Activated T-helper 1 cell treated with anti-CD3 and anti-CD28 coated beads, Interleukin-12 subunit alpha, Interleukin-12 subunit beta, Interleukin-2, Interleukin-4 antibody, amounts not matched to agents 30 ng/mL and 10 ng/mL and 1 ng/mL, durations not matched to agents 14 hours and 24 hours and 36 hours (primary cell): ENCODE measurements at regions of chr3 and their contacts with region 1.

Region 1: DNA sequence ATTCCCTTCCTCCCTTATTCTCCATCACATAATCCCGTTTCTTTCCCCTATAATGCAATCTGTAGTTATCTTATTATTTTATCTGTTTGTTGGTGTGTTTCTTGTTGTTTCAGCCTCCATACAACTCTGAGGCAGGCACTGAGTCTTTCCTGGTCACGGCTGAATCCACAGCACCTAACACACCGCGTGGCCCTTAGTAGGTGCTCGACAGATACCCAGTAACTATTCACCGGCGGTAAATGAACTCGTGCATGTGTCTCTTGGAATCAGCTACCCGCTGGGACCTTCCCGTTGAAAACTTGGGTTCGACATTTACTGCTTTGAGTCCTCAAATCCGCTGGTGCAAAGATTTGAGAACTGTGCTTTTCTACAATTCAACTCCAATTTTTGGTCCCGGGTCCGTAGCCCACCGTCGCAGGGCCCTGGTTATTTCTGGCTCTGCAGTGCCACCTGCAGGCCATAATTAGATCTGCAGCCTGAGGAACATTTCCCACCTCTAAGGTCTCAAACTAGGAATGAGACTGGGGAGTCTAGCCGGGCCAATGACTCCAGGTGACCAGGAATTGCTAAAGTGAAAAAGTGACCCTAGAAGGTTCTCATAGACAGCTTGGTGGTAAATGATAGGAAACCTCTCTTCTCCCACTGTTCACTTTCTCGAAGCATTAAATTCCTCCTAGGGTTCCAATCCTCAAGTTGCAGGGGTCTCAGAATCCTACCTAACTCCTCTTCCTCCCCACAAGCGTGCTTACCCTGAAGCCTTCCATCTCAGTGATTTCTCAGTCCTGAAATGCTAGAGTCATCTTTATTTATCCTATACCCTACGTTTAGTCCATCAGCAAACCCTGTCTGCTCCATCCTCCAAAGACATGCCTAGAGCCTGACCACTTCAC is 40.0 kb upstream of the TRH start:
- DNase-seq: peak; percentile 5
- H3K4me3 Mint-ChIP-seq: no peak overlapping the region
- H3K27ac Mint-ChIP-seq: no peak overlapping the region
- H3K4me1 Mint-ChIP-seq: peaks cover 8% of the 10 kb centered on the region
- H3K27me3 Mint-ChIP-seq: peaks cover 9% of the 10 kb centered on the region

Region 2: DNA sequence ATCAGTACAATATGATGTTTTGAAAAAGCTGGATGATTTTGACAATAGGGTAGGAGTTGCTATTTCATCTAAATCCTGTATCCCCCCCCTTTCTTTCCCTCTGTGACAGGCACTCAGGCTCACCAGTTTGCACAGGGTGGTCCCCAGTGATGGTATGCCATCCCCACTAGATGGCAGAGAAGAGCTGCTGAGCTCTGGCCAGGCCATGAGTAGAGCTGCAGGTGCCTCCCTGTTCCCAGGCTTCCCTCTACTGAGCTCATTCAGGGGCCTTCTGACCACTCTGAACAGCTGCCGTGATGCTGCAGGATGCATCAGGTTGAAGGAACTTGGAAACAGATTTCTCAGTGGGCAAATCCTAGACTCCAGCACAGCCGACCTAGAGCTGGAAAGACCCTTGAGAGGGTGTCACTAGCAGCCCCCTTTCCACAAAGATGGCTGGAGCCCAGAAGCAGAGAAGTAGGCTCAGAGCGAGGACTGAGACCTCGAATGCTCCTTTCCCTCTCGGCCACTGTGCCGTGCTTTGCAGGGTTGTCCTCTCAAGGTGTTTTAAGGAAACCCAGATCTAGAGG is 551.1 kb before region 1 on chr3:
- intact Hi-C with region 1: loop called (anchors 2 kb)
- DNase-seq: peak; percentile 8
- H3K4me3 Mint-ChIP-seq: no peak overlapping the region
- H3K27ac Mint-ChIP-seq: no peak overlapping the region
- H3K4me1 Mint-ChIP-seq: no peaks in the 10 kb centered on the region
- H3K27me3 Mint-ChIP-seq: no peaks in the 10 kb centered on the region

Region 3: DNA sequence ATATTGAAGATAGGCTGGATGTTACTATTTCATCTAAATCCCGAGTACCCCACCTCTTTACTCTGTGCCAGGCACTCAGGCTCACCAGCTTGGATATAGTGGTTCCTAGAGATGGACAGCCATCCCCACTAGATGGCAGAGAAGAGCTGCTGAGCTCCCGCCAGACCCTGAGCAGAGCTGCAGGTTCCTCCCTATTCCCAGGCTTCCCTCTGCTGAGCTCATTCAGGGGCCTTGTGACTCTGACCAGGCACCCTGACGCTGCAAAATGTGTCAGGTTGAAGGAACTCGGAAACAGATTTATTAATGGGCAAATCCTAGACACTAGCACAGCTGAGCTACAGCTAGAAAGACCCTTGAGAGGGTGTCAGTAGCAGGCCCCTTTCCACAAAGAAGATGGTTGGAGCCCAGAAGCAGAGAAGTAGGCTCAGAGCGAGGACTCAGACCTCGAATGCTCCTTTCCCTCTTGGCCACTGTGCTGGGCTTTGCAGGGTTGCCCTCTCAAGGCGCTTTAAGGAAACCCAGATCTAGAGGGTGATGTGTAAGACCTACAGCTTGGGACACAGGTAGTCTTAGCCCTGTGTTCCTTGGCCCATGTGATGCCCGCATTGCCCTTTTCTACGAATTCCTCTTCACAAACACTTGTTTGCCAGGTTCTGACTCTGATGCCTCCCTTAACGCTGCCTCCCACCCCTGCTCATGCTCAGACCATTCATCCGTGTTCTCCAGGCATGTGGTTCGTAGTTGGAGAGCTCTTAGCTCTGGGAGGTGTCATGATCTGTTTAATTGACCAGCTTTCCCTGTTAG is 444.0 kb before region 1 on chr3:
- intact Hi-C with region 1: loop called (anchors 1 kb)
- DNase-seq: peak; percentile 19
- H3K4me3 Mint-ChIP-seq: no peak overlapping the region
- H3K27ac Mint-ChIP-seq: no peak overlapping the region
- H3K4me1 Mint-ChIP-seq: no peaks in the 10 kb centered on the region
- H3K27me3 Mint-ChIP-seq: no peaks in the 10 kb centered on the region

Region 4: GRCh38 chr3:129650256-129650872 is 284.1 kb before region 1 on chr3:
- intact Hi-C with region 1: loop called (anchors 1 kb)
- DNase-seq: peak; percentile 20
- H3K4me3 Mint-ChIP-seq: no peak overlapping the region
- H3K27ac Mint-ChIP-seq: no peak overlapping the region
- H3K4me1 Mint-ChIP-seq: peaks cover 5% of the 10 kb centered on the region
- H3K27me3 Mint-ChIP-seq: peaks cover 5% of the 10 kb centered on the region

Region 5: GRCh38 chr3:129824926-129825541 is 109.4 kb before region 1 on chr3:
- intact Hi-C with region 1: loop called (anchors 1 kb)
- DNase-seq: peak; percentile 19
- H3K4me3 Mint-ChIP-seq: no peak overlapping the region
- H3K27ac Mint-ChIP-seq: no peak overlapping the region
- H3K4me1 Mint-ChIP-seq: peaks cover 20% of the 10 kb centered on the region
- H3K27me3 Mint-ChIP-seq: no peaks in the 10 kb centered on the region

Region 6: GRCh38 chr3:129893581-129894070 is 40.9 kb before region 1 on chr3 and contains the start of gene TMCC1:
- intact Hi-C with region 1: loop called (anchors 2 kb)
- DNase-seq: peak; percentile 83
- H3K4me3 Mint-ChIP-seq: peak within 1 kb of the TSS; percentile 91
- H3K27ac Mint-ChIP-seq: peak within 1 kb of the TSS; percentile 89
- H3K4me1 Mint-ChIP-seq: peaks cover 47% of the 10 kb centered on the region
- H3K27me3 Mint-ChIP-seq: no peaks in the 10 kb centered on the region
- total RNA-seq, gene TMCC1: 17.1 and 22.4 TPM in 2 replicates